Activated naive CD4-positive, alpha-beta T cell treated with anti-CD3 and anti-CD28 coated beads for 36 hours (primary cell): ENCODE measurements at regions of chr5 and their contacts with region 1.

Region 1: GRCh38 chr5:131328536-131329285 is 64.9 kb downstream of the CDC42SE2 start:
- DNase-seq: no peak
- H3K4me3 Mint-ChIP-seq: no peak overlapping the region
- H3K27ac Mint-ChIP-seq: peak overlapping the region; percentile 64
- H3K4me1 Mint-ChIP-seq: peaks cover 64% of the 10 kb centered on the region
- H3K27me3 Mint-ChIP-seq: no peaks in the 10 kb centered on the region

Region 2: DNA sequence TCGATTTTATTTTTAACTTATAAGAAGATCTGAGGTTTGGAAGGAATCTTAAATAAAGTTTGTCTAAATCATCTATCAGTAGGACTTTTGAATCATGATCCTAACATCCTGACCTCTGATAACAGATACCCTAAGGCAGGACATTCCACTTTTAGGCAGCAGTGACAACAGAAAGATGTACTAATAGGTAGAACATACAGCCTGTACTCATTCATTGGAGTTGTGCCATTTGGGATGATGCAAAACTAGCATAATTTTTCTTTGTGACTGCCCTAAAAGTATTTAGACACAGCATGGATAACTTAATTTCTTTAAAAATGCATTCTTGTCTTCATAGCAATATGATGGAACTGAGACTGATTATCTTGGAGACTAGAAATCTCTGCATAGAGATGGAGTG is 25.2 kb before region 1 on chr5:
- CTCF ChIA-PET with region 1: no interaction called
- intact Hi-C with region 1: loop called (anchors 2 kb)
- DNase-seq: no peak
- H3K4me3 Mint-ChIP-seq: no peak overlapping the region
- H3K27ac Mint-ChIP-seq: peak overlapping the region; percentile 28
- H3K4me1 Mint-ChIP-seq: peaks cover 67% of the 10 kb centered on the region
- H3K27me3 Mint-ChIP-seq: no peaks in the 10 kb centered on the region

Region 3: DNA sequence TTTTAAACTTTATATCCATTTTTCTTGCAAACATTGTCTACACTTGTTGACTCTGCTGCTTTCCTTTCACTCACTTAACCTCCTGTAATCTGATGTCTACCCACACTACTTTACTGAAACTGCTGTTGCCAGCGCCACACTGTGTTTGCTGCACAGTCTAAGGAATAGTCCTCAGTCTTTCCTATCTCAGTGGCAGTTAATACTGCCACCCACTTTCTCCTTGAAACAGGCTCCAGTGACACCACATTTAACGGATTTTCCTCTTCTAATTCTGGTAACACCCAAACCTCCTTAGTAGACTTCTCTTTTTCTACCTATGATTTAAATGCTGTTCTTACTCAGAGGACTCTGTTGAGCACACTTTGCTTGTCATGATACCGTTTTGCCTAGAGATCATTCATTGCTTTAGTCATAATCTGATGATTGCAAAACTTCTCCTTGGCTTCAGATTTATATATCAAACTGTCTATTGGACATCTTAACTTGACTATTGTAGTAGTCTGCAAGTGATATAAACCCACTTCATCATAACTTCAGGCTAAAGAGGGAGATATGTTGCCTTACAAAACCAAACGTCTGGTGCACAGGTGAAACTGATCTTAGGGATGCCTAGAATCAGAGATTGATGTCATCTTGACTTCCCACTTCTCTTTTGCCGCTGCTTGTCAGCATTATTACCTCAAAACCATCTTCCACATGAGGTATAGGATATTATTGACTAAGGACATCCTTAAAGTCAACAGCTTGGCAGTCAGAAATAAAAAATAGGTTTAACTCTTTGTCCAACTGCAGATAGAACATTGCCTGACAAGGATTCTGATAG is 29.2 kb after region 1 on chr5:
- CTCF ChIA-PET with region 1: no interaction called
- intact Hi-C with region 1: loop called (anchors 1 kb)
- DNase-seq: peak; percentile 67
- H3K4me3 Mint-ChIP-seq: peak overlapping the region; percentile 54
- H3K27ac Mint-ChIP-seq: peak overlapping the region; percentile 91
- H3K4me1 Mint-ChIP-seq: peaks cover 67% of the 10 kb centered on the region
- H3K27me3 Mint-ChIP-seq: no peaks in the 10 kb centered on the region

Region 4: GRCh38 chr5:131371835-131372234 is 43.1 kb after region 1 on chr5:
- CTCF ChIA-PET with region 1: no interaction called
- intact Hi-C with region 1: no loop called
- DNase-seq: no peak
- H3K4me3 Mint-ChIP-seq: no peak overlapping the region
- H3K27ac Mint-ChIP-seq: peak overlapping the region; percentile 85
- H3K4me1 Mint-ChIP-seq: peaks cover 88% of the 10 kb centered on the region
- H3K27me3 Mint-ChIP-seq: no peaks in the 10 kb centered on the region

Region 5: GRCh38 chr5:131453826-131454225 is 125.1 kb after region 1 on chr5:
- CTCF ChIA-PET with region 1: no interaction called
- intact Hi-C with region 1: no loop called
- DNase-seq: no peak
- H3K4me3 Mint-ChIP-seq: no peak overlapping the region
- H3K27ac Mint-ChIP-seq: no peak overlapping the region
- H3K4me1 Mint-ChIP-seq: peaks cover 40% of the 10 kb centered on the region
- H3K27me3 Mint-ChIP-seq: no peaks in the 10 kb centered on the region